Activated CD8-positive, alpha-beta memory T cell treated with anti-CD3 and anti-CD28 coated beads, Interleukin-2, amount 10 ng/mL, durations not matched to agents 7 days and 5 days (primary cell): ENCODE measurements at regions of chr16 and their contacts with region 1.

Region 1: GRCh38 chr16:22366889-22367288 is 7.5 kb downstream of the CDR2 start:
- DNase-seq: no peak
- ATAC-seq: no peak
- H3K4me3 Mint-ChIP-seq: no peak overlapping the region
- H3K27ac Mint-ChIP-seq: no peak overlapping the region
- H3K4me1 Mint-ChIP-seq: peaks cover 72% of the 10 kb centered on the region
- H3K27me3 Mint-ChIP-seq: no peaks in the 10 kb centered on the region

Region 2: GRCh38 chr16:22321339-22322001 is 45.4 kb before region 1 on chr16:
- CTCF ChIA-PET with region 1: interaction called, 19 read pairs
- DNase-seq: peak; percentile 80
- ATAC-seq: peak; percentile 81
- H3K4me3 Mint-ChIP-seq: no peak overlapping the region
- H3K27ac Mint-ChIP-seq: no peak overlapping the region
- H3K4me1 Mint-ChIP-seq: peaks cover 2% of the 10 kb centered on the region
- H3K27me3 Mint-ChIP-seq: no peaks in the 10 kb centered on the region

Region 3: GRCh38 chr16:22397464-22397863 is 30.6 kb after region 1 on chr16:
- CTCF ChIA-PET with region 1: no interaction called
- DNase-seq: no peak
- ATAC-seq: no peak
- H3K4me3 Mint-ChIP-seq: no peak overlapping the region
- H3K27ac Mint-ChIP-seq: no peak overlapping the region
- H3K4me1 Mint-ChIP-seq: no peaks in the 10 kb centered on the region
- H3K27me3 Mint-ChIP-seq: no peaks in the 10 kb centered on the region

Region 4: DNA sequence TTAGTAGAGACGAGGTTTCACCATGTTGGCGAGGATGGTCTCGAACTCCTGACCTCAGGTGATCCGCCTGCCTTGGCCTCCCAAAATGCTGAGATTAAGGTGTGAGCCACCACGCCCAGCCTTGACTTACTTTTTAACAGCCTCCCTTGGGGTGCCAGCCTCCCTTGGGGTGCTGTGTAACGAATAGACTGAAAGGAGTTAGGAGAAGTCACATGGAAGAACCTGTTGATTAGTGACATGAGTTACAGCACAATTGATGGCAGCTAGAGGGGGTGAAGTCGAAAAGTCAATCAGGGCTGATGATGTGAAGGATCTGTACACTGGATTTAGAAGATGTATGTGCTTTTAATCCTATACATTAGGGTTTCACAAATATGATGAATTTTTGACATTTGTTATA is 46.9 kb after region 1 on chr16:
- CTCF ChIA-PET with region 1: no interaction called
- DNase-seq: no peak
- ATAC-seq: no peak
- H3K4me3 Mint-ChIP-seq: no peak overlapping the region
- H3K27ac Mint-ChIP-seq: no peak overlapping the region
- H3K4me1 Mint-ChIP-seq: no peaks in the 10 kb centered on the region
- H3K27me3 Mint-ChIP-seq: no peaks in the 10 kb centered on the region